Sigmoid colon (tissue), 7 donors: ENCODE measurements at regions of chr13 and their contacts with region 1.

Region 1: DNA sequence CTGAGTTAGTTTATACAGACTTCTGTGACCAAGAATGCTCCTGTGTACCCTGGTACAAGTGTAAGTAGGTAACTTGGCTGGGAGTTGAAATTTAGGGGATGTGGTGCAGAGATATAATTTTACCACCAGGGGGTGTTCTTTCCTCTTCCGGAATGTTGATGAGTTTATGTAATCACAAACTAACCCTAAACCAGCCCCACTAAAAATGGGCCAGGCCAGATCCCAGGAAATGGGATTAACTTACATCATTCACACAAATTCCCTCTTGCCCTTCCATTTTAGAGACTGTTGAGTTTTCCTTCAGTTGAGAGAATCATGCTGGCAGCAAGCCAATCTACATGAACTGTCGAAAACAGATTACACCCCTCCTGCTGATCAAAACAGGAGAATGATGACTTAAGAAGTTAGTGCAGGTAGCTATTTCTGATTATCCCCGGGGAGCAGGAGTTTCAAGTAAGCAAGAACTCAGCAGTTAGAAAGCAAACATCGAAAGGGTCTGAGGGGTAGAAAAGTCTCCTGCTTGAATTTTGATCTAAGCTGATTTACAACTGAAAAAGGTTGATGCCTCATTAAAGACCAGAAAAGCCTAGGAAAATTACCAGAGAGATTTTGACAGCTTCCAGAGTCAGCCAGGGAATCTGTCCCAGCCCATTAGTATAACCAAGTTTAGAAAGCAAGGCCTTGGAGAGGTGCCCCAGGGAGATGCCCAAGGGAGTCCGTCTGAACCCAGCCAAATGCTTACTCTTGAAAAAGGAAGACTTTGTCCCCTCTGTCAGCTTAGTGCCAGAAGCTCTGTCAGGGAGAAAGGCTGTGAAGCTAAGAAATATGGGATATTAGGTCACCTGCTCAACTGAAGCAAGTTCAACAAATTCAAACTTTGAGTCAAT is 32.3 kb upstream of the MED4 start:
- DNase-seq: peak; percentile 87
- H3K4me3 ChIP-seq: no peak overlapping the region
- H3K27ac ChIP-seq: peak overlapping the region; percentile 83 to 86 (median 84)
- H3K4me1 ChIP-seq: peaks cover 0 to 56% (median 48%) of the 10 kb centered on the region in 4 donors
- H3K27me3 ChIP-seq: no peaks in the 10 kb centered on the region
- CTCF ChIP-seq: peak; percentile 32 to 74 (median 66)
- EP300 ChIP-seq: peak in 1 of 4 donors; percentile 12
- POLR2A ChIP-seq: no peak

Region 2: DNA sequence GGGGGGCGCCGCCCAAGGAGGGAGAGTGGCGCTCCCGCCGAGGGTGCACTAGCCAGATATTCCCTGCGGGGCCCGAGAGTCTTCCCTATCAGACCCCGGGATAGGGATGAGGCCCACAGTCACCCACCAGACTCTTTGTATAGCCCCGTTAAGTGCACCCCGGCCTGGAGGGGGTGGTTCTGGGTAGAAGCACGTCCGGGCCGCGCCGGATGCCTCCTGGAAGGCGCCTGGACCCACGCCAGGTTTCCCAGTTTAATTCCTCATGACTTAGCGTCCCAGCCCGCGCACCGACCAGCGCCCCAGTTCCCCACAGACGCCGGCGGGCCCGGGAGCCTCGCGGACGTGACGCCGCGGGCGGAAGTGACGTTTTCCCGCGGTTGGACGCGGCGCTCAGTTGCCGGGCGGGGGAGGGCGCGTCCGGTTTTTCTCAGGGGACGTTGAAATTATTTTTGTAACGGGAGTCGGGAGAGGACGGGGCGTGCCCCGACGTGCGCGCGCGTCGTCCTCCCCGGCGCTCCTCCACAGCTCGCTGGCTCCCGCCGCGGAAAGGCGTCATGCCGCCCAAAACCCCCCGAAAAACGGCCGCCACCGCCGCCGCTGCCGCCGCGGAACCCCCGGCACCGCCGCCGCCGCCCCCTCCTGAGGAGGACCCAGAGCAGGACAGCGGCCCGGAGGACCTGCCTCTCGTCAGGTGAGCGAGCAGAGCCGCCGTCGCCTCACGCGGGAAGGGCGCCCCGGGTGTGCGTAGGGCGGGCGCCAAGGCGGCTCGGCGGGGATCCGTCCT is 176.4 kb after region 1 on chr13 and contains the start of gene RB1:
- intact Hi-C with region 1: loop called (anchors 1 kb)
- DNase-seq: peak; percentile 97
- H3K4me3 ChIP-seq: peak within 1 kb of the TSS; percentile 81 to 95 (median 84)
- H3K27ac ChIP-seq: peak within 1 kb of the TSS; percentile 96 to 99 (median 98)
- H3K4me1 ChIP-seq: peaks cover 0 to 31% (median 26%) of the 10 kb centered on the region in 4 donors
- H3K27me3 ChIP-seq: no peaks in the 10 kb centered on the region
- CTCF ChIP-seq: no peak
- EP300 ChIP-seq: peak in 1 of 4 donors; percentile 76
- POLR2A ChIP-seq: peak; percentile 96 to 98
- total RNA-seq, gene RB1: 26.0 to 35.6 (median 32.3) TPM